ENCODE measurements at regions of chr6 and their contacts with region 1.

Region 1: GRCh38 chr6:159578629-159579028 is 114.4 kb downstream of the SOD2 start:
- DNase-seq: peak; percentile 52
- H3K4me3 Mint-ChIP-seq: no peak overlapping the region
- H3K27ac Mint-ChIP-seq: no peak overlapping the region
- H3K4me1 Mint-ChIP-seq: peaks cover 7% of the 10 kb centered on the region
- H3K27me3 Mint-ChIP-seq: no peaks in the 10 kb centered on the region
- CTCF ChIP-seq: no peak

Region 2: DNA sequence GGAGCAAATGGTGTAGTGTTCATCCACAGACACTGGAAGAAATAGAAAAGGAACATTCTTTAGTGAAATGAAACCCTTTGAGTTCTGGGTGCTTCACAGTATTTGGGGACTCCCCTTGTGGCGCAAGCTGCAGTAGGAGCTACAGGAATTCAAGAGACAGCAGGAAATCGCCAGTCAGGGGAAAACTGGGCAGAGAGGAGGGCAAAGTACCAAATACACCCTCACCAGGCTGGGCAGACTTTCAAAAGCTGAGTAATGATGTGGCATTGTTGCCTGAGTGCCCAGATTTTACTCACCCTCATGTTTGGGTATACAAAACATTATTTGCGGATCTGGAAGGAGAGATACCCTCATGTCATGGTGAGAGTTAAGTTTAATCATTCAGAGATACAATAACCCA is 16.5 kb after region 1 on chr6:
- CTCF ChIA-PET with region 1: no interaction called
- POLR2A ChIA-PET with region 1: interaction called, 4 read pairs
- intact Hi-C with region 1: loop called (anchors 2 kb)
- DNase-seq: peak; percentile 96
- H3K4me3 Mint-ChIP-seq: peak overlapping the region; percentile 30
- H3K27ac Mint-ChIP-seq: peak overlapping the region; percentile 85
- H3K4me1 Mint-ChIP-seq: peaks cover 15% of the 10 kb centered on the region
- H3K27me3 Mint-ChIP-seq: no peaks in the 10 kb centered on the region
- CTCF ChIP-seq: no peak

Measured in MCF 10A (cell line).